Activated naive CD4-positive, alpha-beta T cell treated with anti-CD3 and anti-CD28 coated beads for 36 hours (primary cell): ENCODE measurements at regions of chr10 and their contacts with region 1.

Region 1: DNA sequence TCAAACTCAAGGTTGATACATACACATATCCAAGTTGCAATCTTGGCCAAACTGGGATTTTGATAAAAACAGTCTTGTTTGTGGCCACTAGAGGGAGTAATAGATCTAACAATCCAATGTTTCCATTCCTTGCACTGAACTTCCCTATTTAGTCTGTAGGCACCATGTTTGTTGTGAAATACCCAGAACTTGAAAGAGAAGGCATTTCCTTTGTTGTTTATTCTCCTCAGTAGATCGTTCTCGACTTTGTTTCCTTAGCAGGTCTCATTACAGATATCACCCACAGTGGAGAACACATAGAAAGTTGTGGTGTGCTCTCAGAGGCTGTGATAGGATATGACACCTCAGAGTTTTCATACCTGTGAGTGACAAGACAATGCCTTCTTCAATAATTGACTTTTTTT is 70.3 kb upstream of the MXI1 start:
- DNase-seq: no peak
- H3K4me3 Mint-ChIP-seq: no peak overlapping the region
- H3K27ac Mint-ChIP-seq: peak overlapping the region; percentile 17
- H3K4me1 Mint-ChIP-seq: peaks cover 39% of the 10 kb centered on the region
- H3K27me3 Mint-ChIP-seq: no peaks in the 10 kb centered on the region

Region 2: GRCh38 chr10:110040767-110041478 is 96.2 kb before region 1 on chr10:
- CTCF ChIA-PET with region 1: no interaction called
- intact Hi-C with region 1: no loop called
- DNase-seq: no peak
- H3K4me3 Mint-ChIP-seq: no peak overlapping the region
- H3K27ac Mint-ChIP-seq: peak overlapping the region; percentile 32
- H3K4me1 Mint-ChIP-seq: peaks cover 82% of the 10 kb centered on the region
- H3K27me3 Mint-ChIP-seq: no peaks in the 10 kb centered on the region

Region 3: GRCh38 chr10:110101464-110102144 is 35.5 kb before region 1 on chr10:
- CTCF ChIA-PET with region 1: interaction called, 5 read pairs
- intact Hi-C with region 1: loop called (anchors 1 kb)
- DNase-seq: no peak
- H3K4me3 Mint-ChIP-seq: no peak overlapping the region
- H3K27ac Mint-ChIP-seq: peak overlapping the region; percentile 89
- H3K4me1 Mint-ChIP-seq: peaks cover 76% of the 10 kb centered on the region
- H3K27me3 Mint-ChIP-seq: no peaks in the 10 kb centered on the region

Region 4: GRCh38 chr10:110200503-110200902 is 63.4 kb after region 1 on chr10:
- CTCF ChIA-PET with region 1: interaction called, 28 read pairs
- intact Hi-C with region 1: no loop called
- DNase-seq: no peak
- H3K4me3 Mint-ChIP-seq: no peak overlapping the region
- H3K27ac Mint-ChIP-seq: no peak overlapping the region
- H3K4me1 Mint-ChIP-seq: peaks cover 7% of the 10 kb centered on the region
- H3K27me3 Mint-ChIP-seq: no peaks in the 10 kb centered on the region

Region 5: DNA sequence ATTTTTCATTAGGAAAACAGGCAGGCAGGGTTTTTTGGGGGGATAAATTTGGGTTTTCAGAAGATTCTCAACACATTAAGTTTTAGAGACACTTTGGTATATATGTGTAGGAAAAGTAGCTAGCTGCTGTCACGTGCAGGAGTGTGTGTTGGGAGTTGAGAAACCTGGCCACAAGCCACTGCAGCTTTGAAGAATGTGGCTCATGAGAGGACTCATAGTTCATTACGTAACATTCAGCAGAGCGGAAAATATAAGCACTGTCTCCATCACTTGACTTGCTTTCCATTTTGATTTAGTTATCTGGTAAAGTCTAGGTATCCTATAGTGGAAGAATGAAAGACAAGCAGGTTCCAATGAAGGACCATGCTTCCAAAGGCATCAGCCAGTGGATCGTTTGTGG is 136.3 kb after region 1 on chr10:
- CTCF ChIA-PET with region 1: interaction called, 36 read pairs
- intact Hi-C with region 1: loop called (anchors 1 kb)
- DNase-seq: peak; percentile 74
- H3K4me3 Mint-ChIP-seq: no peak overlapping the region
- H3K27ac Mint-ChIP-seq: no peak overlapping the region
- H3K4me1 Mint-ChIP-seq: peaks cover 49% of the 10 kb centered on the region
- H3K27me3 Mint-ChIP-seq: no peaks in the 10 kb centered on the region

Region 6: GRCh38 chr10:110286841-110287240 is 149.7 kb after region 1 on chr10:
- CTCF ChIA-PET with region 1: interaction called, 17 read pairs
- intact Hi-C with region 1: no loop called
- DNase-seq: no peak
- H3K4me3 Mint-ChIP-seq: no peak overlapping the region
- H3K27ac Mint-ChIP-seq: no peak overlapping the region
- H3K4me1 Mint-ChIP-seq: no peaks in the 10 kb centered on the region
- H3K27me3 Mint-ChIP-seq: no peaks in the 10 kb centered on the region

Region 7: DNA sequence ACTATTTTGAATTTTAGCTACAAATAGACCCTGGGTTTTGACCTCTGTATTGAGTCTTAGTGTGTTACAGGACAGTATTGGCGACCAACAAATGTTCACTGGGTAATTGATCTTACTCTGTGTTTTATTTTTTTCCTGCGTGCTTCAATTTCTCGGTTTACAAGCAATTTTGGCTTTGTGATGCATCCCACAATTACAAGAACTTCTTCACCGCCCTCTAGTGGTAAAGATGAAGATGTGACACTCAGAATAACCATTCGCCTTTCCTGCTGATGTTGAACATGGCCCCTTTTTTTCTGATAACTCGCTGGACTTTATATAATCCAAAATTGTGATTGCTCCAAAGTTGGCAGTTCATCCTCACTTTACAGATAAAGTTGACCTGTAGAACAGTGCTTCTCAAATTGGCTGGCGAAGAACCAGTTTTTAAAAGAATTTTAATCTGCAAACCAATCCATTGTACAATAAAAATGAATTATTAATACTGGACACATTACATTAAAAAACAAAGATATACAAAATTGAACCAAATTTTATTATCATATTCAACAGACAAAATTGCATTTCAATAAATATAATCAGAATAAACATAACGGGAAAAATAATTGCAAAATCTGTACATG is 410.1 kb after region 1 on chr10:
- CTCF ChIA-PET with region 1: interaction called, 4 read pairs
- intact Hi-C with region 1: loop called (anchors 2 kb)
- DNase-seq: no peak
- H3K4me3 Mint-ChIP-seq: no peak overlapping the region
- H3K27ac Mint-ChIP-seq: no peak overlapping the region
- H3K4me1 Mint-ChIP-seq: peaks cover 6% of the 10 kb centered on the region
- H3K27me3 Mint-ChIP-seq: peaks cover 19% of the 10 kb centered on the region